Left ventricle myocardium inferior (tissue), 1 donor: ENCODE measurements at regions of chr6 and their contacts with region 1.

Region 1: GRCh38 chr6:109783250-109783986 is 92.3 kb downstream of the FIG4 start:
- DNase-seq: no peak
- H3K4me3 ChIP-seq: no peak overlapping the region
- H3K27ac ChIP-seq: no peak overlapping the region
- H3K4me1 ChIP-seq: no peaks in the 10 kb centered on the region
- H3K27me3 ChIP-seq: no peaks in the 10 kb centered on the region
- CTCF ChIP-seq: peak; percentile 49

Region 2: GRCh38 chr6:109561844-109562243 is 221.6 kb before region 1 on chr6:
- intact Hi-C with region 1: no loop called
- DNase-seq: no peak
- H3K4me3 ChIP-seq: no peak overlapping the region
- H3K27ac ChIP-seq: no peak overlapping the region
- H3K4me1 ChIP-seq: no peaks in the 10 kb centered on the region
- H3K27me3 ChIP-seq: no peaks in the 10 kb centered on the region
- CTCF ChIP-seq: no peak

Region 3: GRCh38 chr6:109713097-109713496 is 70.3 kb before region 1 on chr6:
- intact Hi-C with region 1: loop called (anchors 10 kb)
- DNase-seq: no peak
- H3K4me3 ChIP-seq: no peak overlapping the region
- H3K27ac ChIP-seq: no peak overlapping the region
- H3K4me1 ChIP-seq: no peaks in the 10 kb centered on the region
- H3K27me3 ChIP-seq: no peaks in the 10 kb centered on the region
- CTCF ChIP-seq: no peak

Region 4: DNA sequence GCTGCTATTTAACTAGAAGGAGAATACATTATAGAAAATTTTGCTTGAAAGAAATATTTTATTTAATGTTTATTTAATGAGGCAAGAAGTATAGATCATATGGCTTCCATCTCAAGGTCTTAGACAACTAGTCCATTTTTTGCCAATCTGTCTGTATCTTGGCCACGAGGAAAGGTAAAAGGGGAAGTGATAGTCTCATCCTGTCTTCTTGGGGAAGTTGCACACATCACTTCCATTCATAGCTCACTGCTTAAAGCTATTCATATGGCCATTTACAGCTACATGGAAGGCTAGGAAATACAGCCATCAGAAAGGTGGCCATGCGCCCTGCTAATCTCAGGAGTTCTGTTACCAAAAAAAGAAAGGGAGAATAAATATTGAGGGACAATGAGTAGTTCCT is 524.0 kb after region 1 on chr6:
- intact Hi-C with region 1: no loop called
- DNase-seq: no peak
- H3K4me3 ChIP-seq: no peak overlapping the region
- H3K27ac ChIP-seq: no peak overlapping the region
- H3K4me1 ChIP-seq: no peaks in the 10 kb centered on the region
- H3K27me3 ChIP-seq: no peaks in the 10 kb centered on the region
- CTCF ChIP-seq: no peak